ENCODE measurements at regions of chr1 and their contacts with region 1.

Region 1: GRCh38 chr1:211698161-211699026 is 23.0 kb upstream of the NEK2 start:
- DNase-seq: peak; percentile 75
- H3K4me3 ChIP-seq: peak overlapping the region; percentile 30
- H3K27ac ChIP-seq: peak overlapping the region; percentile 22
- H3K4me1 ChIP-seq: peaks cover 42% of the 10 kb centered on the region
- CTCF ChIP-seq: peak; percentile 99

Region 2: DNA sequence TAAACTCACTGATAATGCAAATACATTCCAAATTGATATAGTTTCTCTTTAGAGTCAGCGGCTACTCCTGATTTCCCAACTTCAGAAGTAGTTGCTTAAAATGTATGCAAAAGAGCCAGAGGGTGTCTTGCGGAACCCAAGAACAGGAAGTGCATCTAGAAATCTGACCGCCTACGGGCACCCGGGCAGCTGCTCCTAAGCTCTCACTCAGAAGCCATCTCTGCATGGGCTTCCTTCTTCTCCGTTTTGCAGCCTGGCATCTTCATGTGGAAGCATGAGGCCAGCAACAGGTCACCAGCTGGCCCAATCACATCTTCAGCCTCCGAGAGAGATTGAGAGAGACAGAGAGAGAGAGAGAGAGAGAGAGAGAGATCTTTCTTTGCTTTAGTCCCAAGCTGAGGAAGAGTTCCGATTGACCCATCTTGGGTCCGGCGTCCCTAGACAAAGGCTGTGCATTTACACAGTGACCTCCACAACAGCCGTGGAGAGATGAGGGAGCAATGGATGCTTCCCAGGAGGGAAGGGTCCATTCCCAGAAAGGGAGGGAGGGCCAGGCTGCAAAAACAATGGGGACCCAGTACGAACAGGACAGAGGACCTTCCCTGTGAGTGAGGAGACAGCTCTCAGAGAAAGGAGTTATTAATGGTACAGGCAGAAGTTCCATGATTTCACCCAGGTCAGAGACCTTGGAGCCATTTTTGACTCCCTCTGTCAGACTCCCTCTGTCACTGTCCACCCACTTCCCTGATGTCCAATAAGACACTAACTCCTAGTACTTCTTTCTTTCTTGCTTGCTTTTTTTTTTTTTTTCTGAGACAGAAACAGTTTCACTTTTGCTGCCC is 91.3 kb before region 1 on chr1:
- CTCF ChIA-PET with region 1: no interaction called
- POLR2A ChIA-PET with region 1: no interaction called
- intact Hi-C with region 1: no loop called
- DNase-seq: peak; percentile 73
- H3K4me3 ChIP-seq: peak overlapping the region; percentile 54
- H3K27ac ChIP-seq: no peak overlapping the region
- H3K4me1 ChIP-seq: peaks cover 11% of the 10 kb centered on the region
- CTCF ChIP-seq: no peak

Region 3: GRCh38 chr1:211830330-211831142 is 132.1 kb after region 1 on chr1 and contains the start of gene LPGAT1:
- CTCF ChIA-PET with region 1: no interaction called
- POLR2A ChIA-PET with region 1: interaction called, 5 read pairs
- intact Hi-C with region 1: loop called (anchors 1 kb)
- DNase-seq: peak; percentile 81
- H3K4me3 ChIP-seq: peak within 1 kb of the TSS; percentile 77
- H3K27ac ChIP-seq: peak within 1 kb of the TSS; percentile 48
- H3K4me1 ChIP-seq: peaks cover 32% of the 10 kb centered on the region
- CTCF ChIP-seq: peak; percentile 75
- total RNA-seq, gene LPGAT1: 14.1 and 18.7 TPM in 2 replicates

Region 4: GRCh38 chr1:211944733-211945500 is 246.5 kb after region 1 on chr1:
- CTCF ChIA-PET with region 1: no interaction called
- POLR2A ChIA-PET with region 1: no interaction called
- intact Hi-C with region 1: loop called (anchors 5 kb)
- DNase-seq: no peak
- H3K4me3 ChIP-seq: no peak overlapping the region
- H3K27ac ChIP-seq: no peak overlapping the region
- H3K4me1 ChIP-seq: peaks cover 7% of the 10 kb centered on the region
- CTCF ChIP-seq: no peak